CD8-positive, alpha-beta T cell (primary cell): ENCODE measurements at regions of chr2 and their contacts with region 1.

Region 1: GRCh38 chr2:157302492-157303099 is 23.0 kb downstream of the ERMN start:
- DNase-seq: peak in 7 of 9 experiments; percentile 2 to 71 (median 18)
- ATAC-seq: peak; percentile 89
- H3K4me3 ChIP-seq: no peak overlapping the region
- H3K4me3 Mint-ChIP-seq: no peak overlapping the region
- H3K27ac ChIP-seq: no peak overlapping the region
- H3K27ac Mint-ChIP-seq: no peak overlapping the region
- H3K4me1 ChIP-seq: no peaks in the 10 kb centered on the region
- H3K4me1 Mint-ChIP-seq: peaks cover 17% of the 10 kb centered on the region
- H3K27me3 ChIP-seq: no peaks in the 10 kb centered on the region
- H3K27me3 Mint-ChIP-seq: peaks cover 3% of the 10 kb centered on the region
- CTCF ChIP-seq: peak; percentile 89

Region 2: DNA sequence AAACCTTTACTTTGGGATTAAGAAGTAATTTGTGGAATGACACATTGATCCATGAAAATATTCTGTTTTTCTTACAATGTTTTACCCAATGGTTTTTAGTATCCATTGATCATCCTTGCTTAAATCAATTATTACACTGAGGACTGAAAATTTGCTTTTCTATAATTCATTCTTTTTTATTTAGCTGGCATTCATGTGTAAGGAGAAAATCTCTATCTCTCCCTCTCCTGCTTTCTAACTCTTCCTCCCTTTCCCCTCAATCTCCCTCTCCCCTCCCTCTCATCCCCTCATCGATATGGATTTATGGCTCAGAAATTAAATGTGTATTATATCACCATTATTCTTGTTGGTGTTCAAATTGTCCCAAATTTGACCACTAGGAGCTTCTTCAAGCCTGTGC is 15.4 kb before region 1 on chr2:
- CTCF ChIA-PET with region 1: interaction called, 32 read pairs
- POLR2A ChIA-PET with region 1: interaction called, 3 read pairs
- intact Hi-C with region 1: no loop called
- DNase-seq: no peak
- ATAC-seq: no peak
- H3K4me3 ChIP-seq: no peak overlapping the region
- H3K4me3 Mint-ChIP-seq: no peak overlapping the region
- H3K27ac ChIP-seq: no peak overlapping the region
- H3K27ac Mint-ChIP-seq: no peak overlapping the region
- H3K4me1 ChIP-seq: no peaks in the 10 kb centered on the region
- H3K4me1 Mint-ChIP-seq: no peaks in the 10 kb centered on the region
- H3K27me3 ChIP-seq: no peaks in the 10 kb centered on the region
- H3K27me3 Mint-ChIP-seq: no peaks in the 10 kb centered on the region
- CTCF ChIP-seq: no peak

Region 3: DNA sequence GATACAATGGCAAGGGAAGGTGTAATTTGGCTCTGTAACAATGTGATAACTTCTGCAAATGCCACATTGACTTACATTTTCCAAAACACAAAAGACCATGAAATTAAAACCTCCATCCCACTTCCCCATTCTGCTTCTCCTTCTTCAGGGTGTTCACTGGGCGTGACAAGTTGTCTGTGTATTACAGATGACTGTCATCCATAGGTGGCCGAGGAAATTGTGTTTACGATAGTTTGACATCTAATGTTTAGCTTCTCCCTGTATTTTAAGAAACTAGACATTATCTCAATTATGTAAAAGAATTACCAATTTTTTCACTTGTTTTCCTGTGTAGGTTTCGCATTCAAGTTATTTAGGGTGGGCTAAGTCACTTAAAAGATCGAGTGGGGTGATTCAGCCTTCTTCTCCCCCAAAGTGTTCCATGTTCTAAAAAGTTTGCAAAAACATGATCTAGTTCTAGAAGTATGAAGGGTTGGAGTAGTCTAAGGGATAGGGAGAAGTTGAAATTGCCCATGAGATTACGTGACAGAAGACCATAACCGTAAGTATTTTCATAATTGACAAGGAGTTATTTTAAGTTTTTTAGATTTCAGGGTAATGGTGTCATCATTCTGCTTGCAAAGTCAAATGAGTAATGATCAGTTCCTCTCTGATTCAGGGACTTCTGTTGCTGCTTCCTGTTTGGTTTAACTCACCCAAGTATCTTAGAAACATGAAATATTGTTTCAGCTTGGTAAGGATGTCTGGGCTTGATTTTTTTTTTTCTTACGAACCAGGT is 166.5 kb after region 1 on chr2:
- CTCF ChIA-PET with region 1: interaction called, 13 read pairs
- POLR2A ChIA-PET with region 1: no interaction called
- intact Hi-C with region 1: no loop called
- DNase-seq: peak in 2 of 9 experiments; percentile 70 to 85
- ATAC-seq: peak; percentile 87
- H3K4me3 ChIP-seq: peak overlapping the region in 1 of 2 experiments; percentile 2
- H3K4me3 Mint-ChIP-seq: peak overlapping the region; percentile 57
- H3K27ac ChIP-seq: peak overlapping the region; percentile 67 to 73
- H3K27ac Mint-ChIP-seq: peak overlapping the region; percentile 96
- H3K4me1 ChIP-seq: peaks cover 43% of the 10 kb centered on the region
- H3K4me1 Mint-ChIP-seq: peaks cover 67% of the 10 kb centered on the region
- H3K27me3 ChIP-seq: no peaks in the 10 kb centered on the region
- H3K27me3 Mint-ChIP-seq: no peaks in the 10 kb centered on the region
- CTCF ChIP-seq: no peak

Region 4: DNA sequence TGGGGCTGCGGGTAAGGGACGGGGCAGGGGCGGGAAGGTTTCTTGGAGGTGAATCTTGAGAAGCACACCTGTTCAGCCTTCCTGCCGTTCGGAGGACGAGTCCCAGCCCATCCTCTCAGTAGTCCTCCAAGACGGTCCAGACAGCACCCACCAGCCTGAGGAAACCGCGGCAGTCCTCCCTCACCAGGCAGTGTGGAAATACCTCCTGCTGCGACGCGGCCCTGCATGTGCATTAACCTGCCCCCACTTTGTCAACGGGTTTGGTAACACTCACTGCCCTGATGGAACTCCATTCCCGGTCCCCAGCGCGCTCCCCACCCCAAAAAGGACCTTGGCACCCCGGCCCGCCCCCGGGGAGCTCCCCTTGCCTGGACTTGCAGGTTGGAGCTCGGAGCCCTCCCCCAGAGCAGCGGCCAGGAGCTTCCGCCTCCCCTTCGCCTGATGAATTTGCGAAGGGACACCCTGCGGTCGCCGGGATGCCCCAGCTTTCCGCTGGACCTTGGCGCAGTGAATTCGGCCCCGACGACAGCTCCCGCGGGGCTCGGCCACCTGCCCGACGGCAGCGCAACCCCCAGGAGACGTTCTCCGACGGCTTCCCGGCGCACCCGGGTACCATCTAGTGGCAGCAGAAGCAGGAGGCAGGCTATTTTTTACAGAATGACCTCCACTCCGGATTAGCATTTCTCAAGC is 294.5 kb after region 1 on chr2:
- CTCF ChIA-PET with region 1: interaction called, 84 read pairs
- POLR2A ChIA-PET with region 1: no interaction called
- intact Hi-C with region 1: loop called (anchors 1 kb)
- DNase-seq: peak; percentile 18 to 75 (median 57)
- ATAC-seq: peak; percentile 66
- H3K4me3 ChIP-seq: peak overlapping the region; percentile 34 to 36
- H3K4me3 Mint-ChIP-seq: peak overlapping the region; percentile 66
- H3K27ac ChIP-seq: no peak overlapping the region
- H3K27ac Mint-ChIP-seq: no peak overlapping the region
- H3K4me1 ChIP-seq: no peaks in the 10 kb centered on the region
- H3K4me1 Mint-ChIP-seq: peaks cover 10% of the 10 kb centered on the region
- H3K27me3 ChIP-seq: peaks cover 0 to 2% of the 10 kb centered on the region in 2 experiments
- H3K27me3 Mint-ChIP-seq: peaks cover 10% of the 10 kb centered on the region
- CTCF ChIP-seq: peak; percentile 72

Region 5: GRCh38 chr2:157751462-157752058 is 449.0 kb after region 1 on chr2:
- CTCF ChIA-PET with region 1: interaction called, 8 read pairs
- POLR2A ChIA-PET with region 1: no interaction called
- intact Hi-C with region 1: loop called in 1 of 2 experiments (anchors 5 kb)
- DNase-seq: peak in 4 of 9 experiments; percentile 17 to 31 (median 28)
- ATAC-seq: no peak
- H3K4me3 ChIP-seq: no peak overlapping the region
- H3K4me3 Mint-ChIP-seq: no peak overlapping the region
- H3K27ac ChIP-seq: no peak overlapping the region
- H3K27ac Mint-ChIP-seq: no peak overlapping the region
- H3K4me1 ChIP-seq: no peaks in the 10 kb centered on the region
- H3K4me1 Mint-ChIP-seq: peaks cover 2% of the 10 kb centered on the region
- H3K27me3 ChIP-seq: no peaks in the 10 kb centered on the region
- H3K27me3 Mint-ChIP-seq: no peaks in the 10 kb centered on the region
- CTCF ChIP-seq: no peak

Region 6: GRCh38 chr2:158006961-158007719 is 704.5 kb after region 1 on chr2:
- CTCF ChIA-PET with region 1: interaction called, 25 read pairs
- POLR2A ChIA-PET with region 1: no interaction called
- intact Hi-C with region 1: loop called (anchors 1 kb)
- DNase-seq: peak in 1 of 9 experiments; percentile 24
- ATAC-seq: peak; percentile 40
- H3K4me3 ChIP-seq: no peak overlapping the region
- H3K4me3 Mint-ChIP-seq: no peak overlapping the region
- H3K27ac ChIP-seq: no peak overlapping the region
- H3K27ac Mint-ChIP-seq: no peak overlapping the region
- H3K4me1 ChIP-seq: no peaks in the 10 kb centered on the region
- H3K4me1 Mint-ChIP-seq: peaks cover 4% of the 10 kb centered on the region
- H3K27me3 ChIP-seq: no peaks in the 10 kb centered on the region
- H3K27me3 Mint-ChIP-seq: peaks cover 11% of the 10 kb centered on the region
- CTCF ChIP-seq: no peak